Naive thymus-derived CD4-positive, alpha-beta T cell (primary cell): ENCODE measurements at regions of chr22 and their contacts with region 1.

Region 1: DNA sequence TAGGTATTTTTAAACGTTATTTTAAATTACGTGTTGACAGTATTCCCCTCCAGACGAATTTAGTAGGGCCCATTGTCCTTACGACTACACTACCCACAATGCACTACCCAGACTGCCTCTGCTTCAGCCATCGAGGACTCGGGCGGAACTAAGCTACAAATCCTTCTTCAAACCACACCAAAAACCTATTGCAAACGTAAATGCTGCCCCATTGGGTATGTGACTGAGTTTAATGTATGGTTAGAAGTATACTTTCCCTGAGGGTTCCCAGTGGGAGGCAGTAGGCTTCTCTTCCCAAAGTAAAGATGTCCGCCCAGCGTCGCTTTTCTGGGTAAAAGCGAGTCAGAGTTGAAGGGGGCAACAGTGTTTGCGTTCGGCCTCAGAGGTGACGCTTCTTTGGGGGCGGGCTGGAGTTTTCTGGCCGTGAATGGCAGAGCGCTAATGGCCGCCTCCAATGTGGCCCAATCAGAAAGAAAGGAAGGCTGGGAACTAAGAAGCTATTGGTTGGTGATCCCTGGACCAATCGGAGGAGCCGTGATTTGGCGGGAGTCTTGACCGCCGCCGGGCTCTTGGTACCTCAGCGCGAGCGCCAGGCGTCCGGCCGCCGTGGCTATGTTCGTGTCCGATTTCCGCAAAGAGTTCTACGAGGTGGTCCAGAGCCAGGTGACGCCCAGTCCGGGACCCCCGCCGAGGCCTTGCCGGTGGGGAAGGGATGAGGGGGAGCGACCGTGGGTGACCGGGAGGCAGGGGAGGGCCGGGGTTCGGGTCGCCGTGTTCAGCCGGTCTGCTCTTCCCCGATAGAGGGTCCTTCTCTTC is at the start of gene CDC45:
- DNase-seq: peak; percentile 75 to 96 (median 93)
- ATAC-seq: peak; percentile 94
- H3K4me3 ChIP-seq: peak within 1 kb of the TSS; percentile 85
- H3K4me3 Mint-ChIP-seq: peak within 1 kb of the TSS; percentile 87 to 98 (median 92)
- H3K27ac ChIP-seq: peak within 1 kb of the TSS; percentile 96
- H3K27ac Mint-ChIP-seq: peak within 1 kb of the TSS; percentile 98 to 100 (median 99)
- H3K4me1 ChIP-seq: peaks cover 17 to 19% of the 10 kb centered on the region in 2 donors
- H3K4me1 Mint-ChIP-seq: peaks cover 24 to 43% (median 33%) of the 10 kb centered on the region in 7 donors
- H3K27me3 ChIP-seq: no peaks in the 10 kb centered on the region
- H3K27me3 Mint-ChIP-seq: no peaks in the 10 kb centered on the region
- total RNA-seq, gene CDC45: 0.35 to 57.7 (median 0.85) TPM

Region 2: DNA sequence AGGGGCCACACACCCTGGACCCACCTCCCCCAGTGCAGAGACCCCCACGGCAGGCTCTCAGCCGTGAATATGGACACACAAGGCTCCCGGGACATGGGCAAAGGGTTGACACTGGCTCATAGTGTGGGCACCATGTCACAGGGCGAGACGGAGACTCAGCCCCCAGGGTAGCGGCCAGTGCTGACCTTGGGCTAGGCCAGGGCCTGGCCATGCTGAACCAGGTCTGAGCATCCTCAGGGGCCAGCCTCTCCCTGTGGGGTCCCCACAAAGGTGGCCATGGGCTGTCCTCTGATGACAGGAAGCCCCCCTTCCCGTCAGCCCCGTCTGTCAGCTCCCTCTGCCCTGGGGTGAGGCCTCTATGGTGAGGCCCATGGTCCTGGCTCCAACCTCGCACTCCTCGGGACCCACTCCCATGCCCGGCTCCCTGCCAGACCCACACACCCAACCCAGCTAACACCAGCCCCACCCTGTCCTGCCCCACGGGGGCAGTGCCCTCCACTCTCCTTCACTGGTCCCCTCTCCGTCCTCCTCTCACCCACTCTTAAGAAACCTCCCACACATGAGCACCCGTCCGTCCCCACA is 524.5 kb before region 1 on chr22:
- CTCF ChIA-PET with region 1: no interaction called
- POLR2A ChIA-PET with region 1: no interaction called
- intact Hi-C with region 1: loop called in 1 of 2 experiments (anchors 10 kb)
- DNase-seq: no peak
- ATAC-seq: no peak
- H3K4me3 ChIP-seq: no peak overlapping the region
- H3K4me3 Mint-ChIP-seq: no peak overlapping the region
- H3K27ac ChIP-seq: no peak overlapping the region
- H3K27ac Mint-ChIP-seq: no peak overlapping the region
- H3K4me1 ChIP-seq: no peaks in the 10 kb centered on the region
- H3K4me1 Mint-ChIP-seq: peaks cover 0 to 3% (median 0%) of the 10 kb centered on the region in 7 donors
- H3K27me3 ChIP-seq: no peaks in the 10 kb centered on the region
- H3K27me3 Mint-ChIP-seq: peaks cover 0 to 11% (median 4%) of the 10 kb centered on the region in 5 donors

Region 3: DNA sequence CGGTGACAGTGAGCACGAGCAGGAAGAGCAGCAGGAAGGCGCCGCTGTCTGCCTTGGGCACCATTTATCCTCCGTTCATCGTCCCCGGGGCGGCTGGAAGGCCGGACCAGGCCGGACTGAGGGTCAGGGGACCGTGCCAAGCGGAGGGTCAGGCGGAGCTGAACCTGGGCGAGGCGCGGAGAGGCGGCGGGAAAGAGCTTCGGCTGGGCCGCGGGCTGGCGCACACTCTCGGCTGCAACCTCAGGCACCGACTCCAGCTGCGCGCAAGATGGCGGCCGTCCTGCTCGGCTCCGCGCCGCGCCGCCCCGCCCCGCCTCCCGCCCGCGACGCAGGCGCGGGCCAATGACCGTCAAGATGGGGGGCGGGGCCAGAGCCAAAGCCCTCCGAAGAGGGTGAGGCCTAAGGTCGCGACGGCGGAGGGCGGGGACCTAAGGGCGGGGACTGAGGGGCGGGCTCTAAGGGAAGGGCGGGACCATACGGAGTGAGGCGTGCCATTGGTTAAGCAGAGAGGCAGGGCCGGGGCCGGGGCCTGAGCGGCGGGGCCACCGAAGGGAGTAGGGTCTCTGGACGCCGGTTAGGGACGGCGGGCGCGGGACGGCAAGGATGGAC is 357.3 kb before region 1 on chr22 and contains the start of gene DGCR2:
- CTCF ChIA-PET with region 1: no interaction called
- POLR2A ChIA-PET with region 1: no interaction called
- intact Hi-C with region 1: loop called in 1 of 2 experiments (anchors 1 kb)
- DNase-seq: peak; percentile 92 to 96 (median 94)
- ATAC-seq: peak; percentile 99
- H3K4me3 ChIP-seq: peak within 1 kb of the TSS; percentile 90
- H3K4me3 Mint-ChIP-seq: peak within 1 kb of the TSS; percentile 90 to 94 (median 93)
- H3K27ac ChIP-seq: peak within 1 kb of the TSS; percentile 91
- H3K27ac Mint-ChIP-seq: peak within 1 kb of the TSS; percentile 69 to 97 (median 87)
- H3K4me1 ChIP-seq: peaks cover 34 to 42% of the 10 kb centered on the region in 2 donors
- H3K4me1 Mint-ChIP-seq: peaks cover 36 to 53% (median 50%) of the 10 kb centered on the region in 7 donors
- H3K27me3 ChIP-seq: no peaks in the 10 kb centered on the region
- H3K27me3 Mint-ChIP-seq: peaks cover 0 to 2% (median 0%) of the 10 kb centered on the region in 5 donors
- total RNA-seq, gene DGCR2: 38.8 to 79.1 (median 50.4) TPM

Region 4: GRCh38 chr22:19178656-19179496 is 300.7 kb before region 1 on chr22 and contains the start of gene SLC25A1:
- CTCF ChIA-PET with region 1: no interaction called
- POLR2A ChIA-PET with region 1: no interaction called
- intact Hi-C with region 1: loop called in 1 of 2 experiments (anchors 1 kb)
- DNase-seq: peak in 8 of 9 donors; percentile 42 to 96 (median 49)
- ATAC-seq: peak; percentile 82
- H3K4me3 ChIP-seq: peak within 1 kb of the TSS; percentile 58
- H3K4me3 Mint-ChIP-seq: peak within 1 kb of the TSS; percentile 83 to 92 (median 86)
- H3K27ac ChIP-seq: peak within 1 kb of the TSS; percentile 63
- H3K27ac Mint-ChIP-seq: peak within 1 kb of the TSS; percentile 31 to 92 (median 85)
- H3K4me1 ChIP-seq: peaks cover 7 to 9% of the 10 kb centered on the region in 2 donors
- H3K4me1 Mint-ChIP-seq: peaks cover 13 to 28% (median 23%) of the 10 kb centered on the region in 7 donors
- H3K27me3 ChIP-seq: no peaks in the 10 kb centered on the region
- H3K27me3 Mint-ChIP-seq: no peaks in the 10 kb centered on the region
- total RNA-seq, gene SLC25A1: 19.3 to 34.0 (median 30.7) TPM

Region 5: DNA sequence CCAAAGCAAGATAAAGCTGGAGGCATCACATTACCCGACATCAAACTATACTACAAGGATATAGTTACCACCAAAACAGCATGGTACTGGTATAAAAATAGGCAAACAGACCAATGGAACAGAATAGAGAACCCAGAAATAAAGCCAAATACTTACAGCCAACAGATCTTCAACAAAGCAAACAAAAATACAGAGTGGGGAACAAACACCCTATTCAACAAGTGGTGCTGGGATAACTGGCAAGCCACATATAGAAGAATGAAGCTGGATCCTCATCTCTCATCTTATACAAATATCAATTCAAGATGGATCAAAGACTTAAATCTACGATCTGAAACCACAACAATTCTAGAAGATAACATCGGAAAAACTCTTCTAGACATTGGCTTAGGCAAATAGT is 138.1 kb before region 1 on chr22:
- CTCF ChIA-PET with region 1: no interaction called
- POLR2A ChIA-PET with region 1: no interaction called
- intact Hi-C with region 1: no loop called
- DNase-seq: no peak
- ATAC-seq: no peak
- H3K4me3 ChIP-seq: no peak overlapping the region
- H3K4me3 Mint-ChIP-seq: no peak overlapping the region
- H3K27ac ChIP-seq: no peak overlapping the region
- H3K27ac Mint-ChIP-seq: no peak overlapping the region
- H3K4me1 ChIP-seq: no peaks in the 10 kb centered on the region
- H3K4me1 Mint-ChIP-seq: peaks cover 0 to 2% (median 0%) of the 10 kb centered on the region in 7 donors
- H3K27me3 ChIP-seq: no peaks in the 10 kb centered on the region
- H3K27me3 Mint-ChIP-seq: no peaks in the 10 kb centered on the region

Region 6: GRCh38 chr22:19432133-19432851 is 47.3 kb before region 1 on chr22 and contains the start of gene MRPL40:
- CTCF ChIA-PET with region 1: no interaction called
- POLR2A ChIA-PET with region 1: interaction called, 14 read pairs
- intact Hi-C with region 1: loop called (anchors 1 kb)
- DNase-seq: peak; percentile 70 to 92 (median 84)
- ATAC-seq: peak; percentile 90
- H3K4me3 ChIP-seq: peak within 1 kb of the TSS; percentile 97
- H3K4me3 Mint-ChIP-seq: peak within 1 kb of the TSS; percentile 82 to 94 (median 91)
- H3K27ac ChIP-seq: peak within 1 kb of the TSS; percentile 80
- H3K27ac Mint-ChIP-seq: peak within 1 kb of the TSS; percentile 80 to 97 (median 91)
- H3K4me1 ChIP-seq: peaks cover 16 to 23% of the 10 kb centered on the region in 2 donors
- H3K4me1 Mint-ChIP-seq: peaks cover 27 to 50% (median 40%) of the 10 kb centered on the region in 7 donors
- H3K27me3 ChIP-seq: no peaks in the 10 kb centered on the region
- H3K27me3 Mint-ChIP-seq: no peaks in the 10 kb centered on the region
- total RNA-seq, gene MRPL40: 11.5 to 21.2 (median 17.0) TPM

Region 7: GRCh38 chr22:19629720-19630419 is 150.3 kb after region 1 on chr22:
- CTCF ChIA-PET with region 1: interaction called, 13 read pairs
- POLR2A ChIA-PET with region 1: interaction called, 3 read pairs
- intact Hi-C with region 1: loop called (anchors 1 to 5 kb)
- DNase-seq: peak; percentile 65 to 91 (median 86)
- ATAC-seq: peak; percentile 97
- H3K4me3 ChIP-seq: no peak overlapping the region
- H3K4me3 Mint-ChIP-seq: peak overlapping the region in 1 of 10 donors; percentile 26
- H3K27ac ChIP-seq: no peak overlapping the region
- H3K27ac Mint-ChIP-seq: peak overlapping the region in 3 of 9 donors; percentile 6 to 56 (median 43)
- H3K4me1 ChIP-seq: peaks cover 0 to 7% of the 10 kb centered on the region in 2 donors
- H3K4me1 Mint-ChIP-seq: peaks cover 3 to 22% (median 10%) of the 10 kb centered on the region in 7 donors
- H3K27me3 ChIP-seq: no peaks in the 10 kb centered on the region
- H3K27me3 Mint-ChIP-seq: peaks cover 0 to 3% (median 0%) of the 10 kb centered on the region in 5 donors